PC-3 (cell line): ENCODE measurements at regions of chr7 and their contacts with region 1.

Region 1: GRCh38 chr7:92781117-92781720 is 55.2 kb downstream of the CDK6 start:
- DNase-seq: peak; percentile 29
- ATAC-seq: peak; percentile 58
- H3K4me3 ChIP-seq: no peak overlapping the region
- H3K27ac ChIP-seq: no peak overlapping the region
- H3K4me1 ChIP-seq: peaks cover 23% of the 10 kb centered on the region
- H3K27me3 ChIP-seq: no peaks in the 10 kb centered on the region
- CTCF ChIP-seq: no peak

Region 2: GRCh38 chr7:92343719-92344118 is 437.5 kb before region 1 on chr7:
- CTCF ChIA-PET with region 1: no interaction called
- POLR2A ChIA-PET with region 1: interaction called, 18 read pairs
- intact Hi-C with region 1: no loop called
- DNase-seq: no peak
- ATAC-seq: peak; percentile 40; the same call in 1 of the 2 replicates
- H3K4me3 ChIP-seq: no peak overlapping the region
- H3K27ac ChIP-seq: no peak overlapping the region
- H3K4me1 ChIP-seq: no peaks in the 10 kb centered on the region
- H3K27me3 ChIP-seq: no peaks in the 10 kb centered on the region
- CTCF ChIP-seq: no peak

Region 3: DNA sequence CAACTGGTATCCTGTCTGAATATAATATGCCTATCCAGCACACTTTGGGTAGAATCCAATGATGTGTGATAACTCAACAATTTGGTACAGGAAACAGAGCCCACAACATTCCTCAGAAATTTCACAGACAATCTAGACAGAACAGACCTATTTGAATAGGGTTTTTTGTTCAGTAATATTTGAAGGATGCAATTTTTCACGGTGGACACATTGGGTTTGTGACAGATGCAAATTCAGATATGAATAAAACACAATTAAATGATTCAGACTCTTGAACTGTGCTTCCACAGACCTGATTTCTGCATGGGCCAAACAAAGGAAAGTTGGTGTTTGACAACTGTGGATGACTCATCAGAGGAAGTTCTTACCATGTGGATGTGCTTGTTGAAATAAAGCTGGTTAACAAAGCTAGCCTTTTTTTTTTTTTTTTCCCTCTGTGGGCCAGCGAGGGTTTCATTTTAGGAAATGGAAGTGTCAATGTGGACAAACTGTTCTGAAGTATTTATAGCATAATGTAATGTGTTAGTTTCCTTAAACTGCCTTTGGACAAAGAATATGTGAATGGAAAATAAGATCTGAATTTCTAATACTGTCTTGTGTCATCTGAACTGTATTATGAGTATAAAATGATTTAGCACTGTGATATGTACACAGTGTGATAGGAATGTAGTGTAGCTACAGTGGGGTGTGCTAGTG is 147.9 kb before region 1 on chr7:
- CTCF ChIA-PET with region 1: no interaction called
- POLR2A ChIA-PET with region 1: no interaction called
- intact Hi-C with region 1: loop called (anchors 5 kb)
- DNase-seq: peak; percentile 91
- ATAC-seq: peak; percentile 80
- H3K4me3 ChIP-seq: peak overlapping the region; percentile 38; the same call in 1 of the 2 replicates
- H3K27ac ChIP-seq: peak overlapping the region; percentile 73
- H3K4me1 ChIP-seq: peaks cover 51% of the 10 kb centered on the region
- H3K27me3 ChIP-seq: no peaks in the 10 kb centered on the region
- CTCF ChIP-seq: no peak

Region 4: DNA sequence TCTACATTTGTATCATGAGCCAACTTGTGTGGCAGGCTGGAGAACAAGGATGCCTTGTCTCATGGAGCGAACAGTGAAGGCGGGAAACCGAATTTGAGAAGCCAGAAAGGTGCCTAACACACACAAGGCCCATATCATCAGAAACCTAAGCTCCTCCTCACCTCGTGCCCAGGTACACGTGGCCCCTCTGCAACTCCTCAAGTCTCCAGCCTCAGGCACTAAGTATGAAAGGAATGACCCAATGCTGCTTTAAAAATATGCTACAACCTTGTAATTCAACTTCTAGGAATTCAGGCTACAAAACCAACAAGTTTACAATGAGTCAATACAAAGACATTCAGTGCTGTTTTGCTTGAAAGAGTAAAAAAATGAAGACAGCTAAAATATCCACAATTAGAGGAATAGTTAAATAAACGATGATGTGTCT is 40.5 kb before region 1 on chr7:
- CTCF ChIA-PET with region 1: no interaction called
- POLR2A ChIA-PET with region 1: no interaction called
- intact Hi-C with region 1: loop called (anchors 5 kb)
- DNase-seq: peak; percentile 89
- ATAC-seq: peak; percentile 83
- H3K4me3 ChIP-seq: peak overlapping the region; percentile 43
- H3K27ac ChIP-seq: peak overlapping the region; percentile 46
- H3K4me1 ChIP-seq: peaks cover 28% of the 10 kb centered on the region
- H3K27me3 ChIP-seq: no peaks in the 10 kb centered on the region
- CTCF ChIP-seq: no peak

Region 5: DNA sequence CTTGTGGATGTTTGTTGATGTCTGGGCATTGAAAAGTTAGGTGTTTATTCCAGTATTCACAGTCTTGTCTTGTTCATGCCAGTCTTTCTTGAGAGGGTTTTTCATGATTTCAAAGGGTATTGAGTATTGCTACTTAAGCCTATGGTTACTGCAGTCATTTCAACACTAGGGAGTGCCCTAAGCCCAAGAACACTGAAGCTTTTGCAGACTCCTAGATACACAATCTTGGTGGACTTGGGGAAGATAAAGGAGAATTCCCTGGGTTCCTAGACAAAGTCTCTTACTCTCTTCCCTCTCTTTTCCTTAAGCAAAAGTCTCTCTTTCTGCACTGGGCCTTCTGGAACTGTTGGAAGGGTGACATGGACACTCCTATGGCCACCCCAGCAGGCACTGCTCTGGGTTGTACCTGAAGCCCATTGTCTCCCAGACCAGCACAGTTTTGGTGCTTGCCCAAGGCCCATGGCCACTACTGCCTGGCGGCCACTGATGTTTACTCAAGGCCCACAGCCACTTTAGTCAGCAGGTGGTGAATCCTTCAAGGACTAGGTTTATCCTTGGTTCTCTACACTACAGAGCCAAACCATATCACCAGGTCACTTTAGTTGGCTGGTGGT is 311.6 kb after region 1 on chr7:
- CTCF ChIA-PET with region 1: no interaction called
- POLR2A ChIA-PET with region 1: no interaction called
- intact Hi-C with region 1: no loop called
- DNase-seq: peak; percentile 46
- ATAC-seq: peak; percentile 81
- H3K4me3 ChIP-seq: no peak overlapping the region
- H3K27ac ChIP-seq: no peak overlapping the region
- H3K4me1 ChIP-seq: no peaks in the 10 kb centered on the region
- H3K27me3 ChIP-seq: no peaks in the 10 kb centered on the region
- CTCF ChIP-seq: peak; percentile 64